ENCODE measurements at regions of chr10 and their contacts with region 1.

Region 1: GRCh38 chr10:30857803-30858202 is 173.9 kb downstream of the ZNF438 start:
- DNase-seq: peak; percentile 83 to 87
- ATAC-seq: peak; percentile 93 to 94
- H3K4me3 ChIP-seq: no peak overlapping the region
- H3K27ac ChIP-seq: peak overlapping the region; percentile 68 to 78 (median 70)
- H3K4me1 ChIP-seq: peaks cover 40 to 53% of the 10 kb centered on the region in 2 donors
- H3K27me3 ChIP-seq: no peaks in the 10 kb centered on the region
- CTCF ChIP-seq: no peak
- POLR2A ChIP-seq: no peak

Region 2: GRCh38 chr10:30840406-30841050 is 17.3 kb before region 1 on chr10:
- in situ Hi-C with region 1: no loop called
- intact Hi-C with region 1: loop called (anchors 2 kb)
- DNase-seq: peak in 1 of 2 donors; percentile 67
- ATAC-seq: peak; percentile 70 to 71
- H3K4me3 ChIP-seq: peak overlapping the region in 1 of 4 donors; percentile 29
- H3K27ac ChIP-seq: peak overlapping the region; percentile 42 to 69 (median 56)
- H3K4me1 ChIP-seq: peaks cover 36 to 40% of the 10 kb centered on the region in 2 donors
- H3K27me3 ChIP-seq: no peaks in the 10 kb centered on the region
- CTCF ChIP-seq: no peak
- POLR2A ChIP-seq: no peak

Region 3: GRCh38 chr10:30935078-30935477 is 77.3 kb after region 1 on chr10:
- in situ Hi-C with region 1: no loop called
- intact Hi-C with region 1: no loop called
- DNase-seq: no peak
- ATAC-seq: peak; percentile 46 to 58
- H3K4me3 ChIP-seq: no peak overlapping the region
- H3K27ac ChIP-seq: peak overlapping the region; percentile 32 to 58 (median 38)
- H3K4me1 ChIP-seq: peaks cover 12 to 14% of the 10 kb centered on the region in 2 donors
- H3K27me3 ChIP-seq: no peaks in the 10 kb centered on the region
- CTCF ChIP-seq: no peak
- POLR2A ChIP-seq: no peak

Region 4: GRCh38 chr10:30970760-30971460 is 113.1 kb after region 1 on chr10:
- in situ Hi-C with region 1: no loop called
- intact Hi-C with region 1: loop called (anchors 5 kb)
- DNase-seq: peak in 1 of 2 donors; percentile 63
- ATAC-seq: peak; percentile 16 to 47
- H3K4me3 ChIP-seq: peak overlapping the region in 2 of 4 donors; percentile 10 to 17
- H3K27ac ChIP-seq: peak overlapping the region; percentile 84 to 93 (median 89)
- H3K4me1 ChIP-seq: peaks cover 52 to 54% of the 10 kb centered on the region in 2 donors
- H3K27me3 ChIP-seq: no peaks in the 10 kb centered on the region
- CTCF ChIP-seq: no peak
- POLR2A ChIP-seq: no peak

Region 5: DNA sequence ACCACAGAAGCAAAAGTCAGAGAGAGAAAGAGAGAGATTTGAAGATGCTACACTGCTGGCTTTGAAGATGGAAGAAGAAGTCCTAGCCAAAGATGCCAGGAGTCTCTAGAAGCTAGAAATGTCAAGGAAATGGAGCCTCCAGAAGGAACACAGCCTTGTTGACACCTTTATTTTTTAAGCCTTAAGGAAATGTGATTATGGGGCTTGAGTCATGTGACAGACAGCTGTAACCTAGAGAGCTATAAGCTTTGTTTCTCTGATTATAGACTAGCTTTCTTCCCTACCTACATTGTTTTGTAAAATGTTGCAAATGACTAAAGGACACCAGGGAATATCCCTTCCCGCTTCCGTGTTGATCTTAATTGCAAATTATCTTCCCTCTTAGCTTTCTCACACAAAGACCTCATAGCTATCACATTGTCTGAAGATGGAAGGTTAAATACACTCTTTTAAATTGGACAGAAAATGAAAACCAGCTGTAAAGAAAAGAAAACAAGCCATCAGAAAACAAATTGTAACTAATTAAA is 871.0 kb after region 1 on chr10:
- in situ Hi-C with region 1: no loop called
- intact Hi-C with region 1: no loop called
- DNase-seq: no peak
- ATAC-seq: no peak
- H3K4me3 ChIP-seq: no peak overlapping the region
- H3K27ac ChIP-seq: no peak overlapping the region
- H3K4me1 ChIP-seq: peaks cover 5 to 8% of the 10 kb centered on the region in 2 donors
- H3K27me3 ChIP-seq: no peaks in the 10 kb centered on the region
- CTCF ChIP-seq: no peak
- POLR2A ChIP-seq: no peak